HCT116 (cell line): ENCODE measurements at regions of chr13 and their contacts with region 1.

Region 1: GRCh38 chr13:75482070-75482819 is at the start of gene TBC1D4:
- DNase-seq: peak; percentile 76
- ATAC-seq: peak; percentile 80
- H3K4me3 ChIP-seq: peak within 1 kb of the TSS; percentile 72 to 76
- H3K27ac ChIP-seq: peak within 1 kb of the TSS; percentile 82
- H3K4me1 ChIP-seq: peaks cover 23 to 38% of the 10 kb centered on the region in 2 experiments
- H3K27me3 ChIP-seq: no peaks in the 10 kb centered on the region
- CTCF ChIP-seq: peak; percentile 77 to 90 (median 80)
- POLR2A ChIP-seq: peak; percentile 20
- RAD21 ChIP-seq: peak; percentile 68
- total RNA-seq, gene TBC1D4: 24.6 TPM

Region 2: GRCh38 chr13:75372517-75372916 is 109.7 kb before region 1 on chr13:
- CTCF ChIA-PET with region 1: interaction called, 9 read pairs
- POLR2A ChIA-PET with region 1: no interaction called
- RAD21 ChIA-PET with region 1: interaction called in 1 of 2 experiments, 3 read pairs
- intact Hi-C with region 1: loop called (anchors 2 kb)
- DNase-seq: no peak
- ATAC-seq: peak; percentile 81
- H3K4me3 ChIP-seq: no peak overlapping the region
- H3K27ac ChIP-seq: no peak overlapping the region
- H3K4me1 ChIP-seq: peaks cover 15 to 18% of the 10 kb centered on the region in 2 experiments; a peak in 3 of 4 replicates
- H3K27me3 ChIP-seq: no peaks in the 10 kb centered on the region
- CTCF ChIP-seq: peak; percentile 51 to 61 (median 59); a peak in 5 of 6 replicates
- POLR2A ChIP-seq: no peak
- RAD21 ChIP-seq: peak; percentile 55

Region 3: DNA sequence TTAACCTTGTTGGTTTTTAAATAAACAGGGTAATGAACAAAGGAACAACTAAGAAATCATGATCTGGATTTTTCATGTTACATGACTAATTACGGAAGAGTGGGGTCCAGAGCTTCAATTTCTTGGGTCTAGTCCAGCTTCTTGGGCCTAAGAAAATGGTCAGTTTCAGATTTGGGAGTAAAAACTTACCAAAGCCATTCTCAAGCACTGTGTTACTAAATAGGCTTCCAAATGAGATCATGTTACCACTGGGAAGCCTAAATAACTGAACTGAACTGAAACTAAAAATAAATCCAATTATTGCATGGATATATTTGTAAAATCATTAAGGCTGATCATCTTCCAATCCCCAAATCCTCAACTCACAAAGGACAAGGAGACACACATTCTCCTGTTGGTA is 14.1 kb before region 1 on chr13:
- CTCF ChIA-PET with region 1: interaction called, 13 read pairs
- POLR2A ChIA-PET with region 1: no interaction called
- RAD21 ChIA-PET with region 1: no interaction called
- intact Hi-C with region 1: no loop called
- DNase-seq: no peak
- ATAC-seq: no peak
- H3K4me3 ChIP-seq: no peak overlapping the region
- H3K27ac ChIP-seq: no peak overlapping the region
- H3K4me1 ChIP-seq: 0 out of 4 replicates have a peak, but pooled peaks cover 0 to 3% of the 10 kb centered on the region in 2 experiments
- H3K27me3 ChIP-seq: no peaks in the 10 kb centered on the region
- CTCF ChIP-seq: no peak
- POLR2A ChIP-seq: no peak
- RAD21 ChIP-seq: no peak

Region 4: DNA sequence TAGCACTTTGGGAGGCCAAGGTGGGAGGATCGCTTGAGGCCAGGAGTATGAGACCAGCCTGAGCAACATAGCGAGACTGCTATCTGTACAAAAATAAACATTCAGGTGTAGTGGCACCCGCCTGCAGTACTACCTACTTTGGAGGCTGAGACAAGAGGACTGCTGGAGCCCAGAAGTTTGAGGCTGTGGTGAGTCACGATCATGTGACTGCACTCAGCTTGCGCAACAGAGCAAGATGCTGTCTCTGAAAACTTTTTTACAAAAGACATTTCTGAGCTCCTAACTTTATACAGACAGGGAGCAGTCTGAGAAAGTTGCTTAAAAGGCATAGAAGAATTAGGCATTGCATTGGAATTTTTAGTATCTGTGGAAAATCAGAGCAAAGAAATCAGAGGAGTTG is 10.1 kb after region 1 on chr13:
- CTCF ChIA-PET with region 1: interaction called, 10 read pairs
- POLR2A ChIA-PET with region 1: no interaction called
- RAD21 ChIA-PET with region 1: no interaction called
- intact Hi-C with region 1: no loop called
- DNase-seq: no peak
- ATAC-seq: no peak
- H3K4me3 ChIP-seq: no peak overlapping the region
- H3K27ac ChIP-seq: no peak overlapping the region
- H3K4me1 ChIP-seq: no peaks in the 10 kb centered on the region; a peak in 1 of 4 replicates
- H3K27me3 ChIP-seq: no peaks in the 10 kb centered on the region
- CTCF ChIP-seq: no peak
- POLR2A ChIP-seq: no peak
- RAD21 ChIP-seq: no peak

Region 5: DNA sequence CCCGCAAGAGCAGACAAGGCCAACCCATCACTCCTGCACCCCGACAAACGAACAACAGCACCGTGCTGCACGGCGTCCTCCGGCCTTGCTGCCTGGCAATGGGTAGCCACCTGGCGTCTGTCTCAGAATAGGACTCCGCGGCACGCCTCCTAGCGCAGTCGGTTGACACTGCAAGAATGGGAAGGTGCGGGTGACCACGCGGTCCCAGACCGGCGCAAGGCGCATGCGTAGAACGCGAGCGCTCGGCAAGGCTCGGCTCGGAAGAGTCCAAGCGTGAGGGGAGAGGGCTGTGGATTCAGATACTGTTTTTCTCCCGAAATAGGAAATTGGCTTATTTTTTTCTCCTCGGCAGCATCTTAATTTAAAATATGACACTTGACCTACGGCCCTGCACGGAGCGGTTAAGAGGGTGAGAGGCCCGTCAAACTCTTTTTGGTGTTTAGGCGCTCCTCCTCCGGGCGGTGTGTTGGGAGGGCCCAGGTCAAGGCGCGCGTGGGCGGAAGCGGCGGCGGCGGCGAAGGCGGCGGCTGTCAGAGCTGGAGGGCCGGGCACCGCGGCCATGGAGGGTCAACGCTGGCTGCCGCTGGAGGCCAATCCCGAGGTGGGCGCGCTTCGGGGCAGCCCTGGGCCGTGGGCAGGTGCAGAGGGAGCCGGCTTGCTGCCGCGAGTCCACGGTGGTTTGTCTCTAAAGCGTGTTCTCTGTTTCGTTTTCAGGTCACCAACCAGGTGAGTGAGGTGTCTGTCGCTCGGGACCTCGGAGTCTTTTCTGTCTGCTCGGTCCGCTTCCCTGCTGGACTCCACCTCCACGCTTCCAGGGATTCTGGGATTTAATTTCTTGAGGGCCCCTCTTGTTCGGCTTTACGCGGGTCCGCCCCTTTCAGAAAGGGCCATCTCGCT is 67.3 kb after region 1 on chr13 and contains the start of gene UCHL3:
- CTCF ChIA-PET with region 1: interaction called, 3 read pairs
- POLR2A ChIA-PET with region 1: interaction called, 4 read pairs
- RAD21 ChIA-PET with region 1: interaction called in 1 of 2 experiments, 3 read pairs
- intact Hi-C with region 1: loop called (anchors 2 kb)
- DNase-seq: peak; percentile 94
- ATAC-seq: peak; percentile 90
- H3K4me3 ChIP-seq: peak within 1 kb of the TSS; percentile 74 to 81
- H3K27ac ChIP-seq: peak within 1 kb of the TSS; percentile 63
- H3K4me1 ChIP-seq: peaks cover 5 to 19% of the 10 kb centered on the region in 2 experiments; a peak in 3 of 4 replicates
- H3K27me3 ChIP-seq: no peaks in the 10 kb centered on the region
- CTCF ChIP-seq: peak; percentile 70 to 97 (median 82)
- POLR2A ChIP-seq: peak; percentile 58
- RAD21 ChIP-seq: peak; percentile 78
- total RNA-seq, gene UCHL3: 32.4 TPM